GM10248 (cell line): ENCODE measurements at regions of chr12 and their contacts with region 1.

Region 1: GRCh38 chr12:48995061-48995879 is 3.9 kb downstream of the DDN start:
- DNase-seq: peak; percentile 83
- CTCF ChIP-seq: peak; percentile 81

Region 2: DNA sequence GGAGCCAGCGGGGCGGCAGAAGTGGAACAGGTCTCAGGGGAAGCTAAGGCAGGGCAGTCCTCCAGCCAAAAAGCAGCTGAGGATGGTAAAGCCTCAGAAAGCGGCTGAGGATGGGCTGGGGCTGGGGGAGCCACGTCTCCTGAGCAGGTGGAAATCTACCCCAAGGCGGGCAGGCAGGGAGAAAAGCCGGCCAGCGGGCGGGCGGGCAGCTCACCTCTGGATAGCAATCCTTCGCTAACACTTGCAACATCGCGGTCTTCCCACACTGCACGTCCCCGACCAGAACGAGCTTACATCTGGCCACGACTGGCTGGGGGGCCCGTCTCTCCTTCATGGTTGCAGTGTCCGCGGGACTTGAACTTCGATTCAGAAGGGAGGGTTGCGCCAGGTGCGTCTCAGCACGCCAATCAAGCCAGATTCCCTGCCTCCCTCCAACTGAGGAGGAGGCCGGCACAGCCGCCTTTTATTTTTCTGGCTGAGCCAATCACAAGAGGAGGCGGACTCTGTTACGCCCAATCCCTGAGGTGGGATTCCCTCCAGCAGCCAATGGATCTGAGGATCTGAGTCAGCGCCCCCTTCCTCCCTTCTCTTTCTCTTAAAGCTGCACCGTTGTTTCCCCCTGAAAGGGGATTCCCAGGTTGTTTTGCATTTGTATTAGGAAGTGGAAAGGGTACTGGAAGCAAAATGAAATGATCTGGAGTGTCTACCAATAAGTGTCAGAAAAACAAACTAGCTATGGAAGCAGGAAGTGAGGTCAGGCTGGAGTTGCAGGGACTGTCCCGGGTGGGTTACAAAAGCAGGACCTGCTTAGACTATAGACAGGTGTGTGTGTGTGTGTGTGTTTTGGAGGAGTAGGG is 129.6 kb before region 1 on chr12 and contains the start of gene RND1:
- CTCF ChIA-PET with region 1: interaction called, 13 read pairs
- POLR2A ChIA-PET with region 1: interaction called, 3 read pairs
- DNase-seq: peak; percentile 93
- CTCF ChIP-seq: no peak

Region 3: DNA sequence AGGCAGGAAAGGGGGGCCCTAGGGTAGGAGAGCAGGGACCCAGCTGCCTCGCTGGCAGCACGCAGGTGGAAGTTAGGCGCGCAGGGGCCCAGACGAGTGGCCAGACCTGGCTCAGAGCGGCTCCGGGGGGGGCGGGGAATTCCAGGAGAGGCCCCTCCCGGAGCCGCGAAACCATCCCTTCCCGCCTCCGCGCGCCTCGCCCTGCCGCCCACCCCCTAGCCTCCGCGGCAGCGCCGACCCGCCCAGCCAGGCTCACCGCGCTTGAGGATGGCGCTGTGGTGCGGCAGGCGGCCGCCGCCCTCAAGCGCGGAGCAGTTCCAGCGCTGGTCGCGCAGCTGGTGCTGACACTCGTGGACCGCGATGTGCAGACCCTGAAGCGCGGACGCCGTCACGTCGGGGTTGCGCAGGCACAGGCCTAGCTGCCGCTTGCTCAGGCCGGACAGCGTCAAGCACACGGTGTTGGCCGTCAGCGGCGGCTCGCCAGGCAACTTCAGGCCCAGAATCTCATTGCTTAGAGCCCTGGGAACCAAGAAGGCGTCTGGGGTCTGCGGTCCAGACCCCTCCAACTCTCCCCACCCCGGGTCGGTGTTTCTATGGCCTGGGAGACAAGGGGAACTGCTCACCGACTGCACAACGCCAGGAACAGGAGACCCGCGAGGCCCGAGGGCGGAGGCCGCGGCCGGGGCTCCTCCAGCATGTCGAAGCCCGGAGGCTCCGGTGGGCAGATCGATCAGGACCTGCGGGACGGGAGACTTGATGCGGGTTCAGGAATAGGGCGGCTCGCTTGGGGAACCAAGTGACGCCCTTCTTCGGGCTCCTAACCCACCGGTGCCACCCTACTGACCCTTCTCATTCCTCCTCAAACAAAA is 25.2 kb before region 1 on chr12:
- CTCF ChIA-PET with region 1: interaction called, 417 read pairs
- POLR2A ChIA-PET with region 1: no interaction called
- DNase-seq: peak; percentile 66
- CTCF ChIP-seq: peak; percentile 29

Region 4: DNA sequence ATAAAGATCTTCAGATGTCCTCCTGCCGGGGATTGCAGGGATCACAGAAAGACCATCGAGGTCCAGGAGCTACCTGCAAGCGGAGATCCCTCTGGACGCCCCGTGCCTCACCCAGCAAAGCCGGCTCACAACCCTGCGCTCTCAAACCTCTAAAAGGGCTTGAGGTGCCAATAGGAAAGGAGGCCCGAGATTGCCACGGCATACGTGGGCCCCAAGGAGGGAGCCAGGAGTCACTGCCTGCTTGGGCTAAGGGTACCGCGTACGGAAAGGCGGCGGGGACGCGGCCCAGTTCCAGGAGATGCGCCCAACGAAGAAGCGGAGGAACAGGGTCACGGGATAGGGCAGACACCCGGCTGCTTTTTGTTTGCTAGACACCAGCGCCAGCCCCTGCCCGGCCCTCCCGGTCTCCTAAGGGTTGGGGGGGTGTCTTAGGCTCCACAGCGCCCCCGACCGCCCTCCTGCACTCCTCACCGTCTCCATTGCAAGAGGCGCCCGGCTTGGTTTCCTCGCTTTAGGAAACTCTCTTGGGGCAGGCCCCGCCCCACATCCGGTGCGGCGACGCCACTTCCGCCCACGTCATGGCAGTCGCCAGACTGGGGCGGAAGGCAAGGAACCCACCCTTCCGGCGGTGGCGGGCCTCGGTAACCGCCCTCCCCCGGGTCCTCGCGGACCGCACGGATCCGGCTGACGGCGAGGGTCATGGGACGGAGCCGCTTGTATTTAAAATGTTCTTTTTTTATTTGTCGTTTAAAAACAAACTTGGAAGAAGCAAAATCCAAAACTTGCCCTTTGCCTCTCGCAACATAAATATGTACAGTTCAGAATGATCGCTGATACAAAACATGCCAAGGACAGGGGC is 23.2 kb after region 1 on chr12 and contains the start of gene PRKAG1:
- CTCF ChIA-PET with region 1: interaction called, 253 read pairs
- POLR2A ChIA-PET with region 1: interaction called, 6 read pairs
- DNase-seq: peak; percentile 99
- CTCF ChIP-seq: peak; percentile 53

Region 5: GRCh38 chr12:49037111-49037946 is 42.1 kb after region 1 on chr12:
- CTCF ChIA-PET with region 1: interaction called, 18 read pairs
- POLR2A ChIA-PET with region 1: interaction called, 4 read pairs
- DNase-seq: no peak
- CTCF ChIP-seq: no peak

Region 6: DNA sequence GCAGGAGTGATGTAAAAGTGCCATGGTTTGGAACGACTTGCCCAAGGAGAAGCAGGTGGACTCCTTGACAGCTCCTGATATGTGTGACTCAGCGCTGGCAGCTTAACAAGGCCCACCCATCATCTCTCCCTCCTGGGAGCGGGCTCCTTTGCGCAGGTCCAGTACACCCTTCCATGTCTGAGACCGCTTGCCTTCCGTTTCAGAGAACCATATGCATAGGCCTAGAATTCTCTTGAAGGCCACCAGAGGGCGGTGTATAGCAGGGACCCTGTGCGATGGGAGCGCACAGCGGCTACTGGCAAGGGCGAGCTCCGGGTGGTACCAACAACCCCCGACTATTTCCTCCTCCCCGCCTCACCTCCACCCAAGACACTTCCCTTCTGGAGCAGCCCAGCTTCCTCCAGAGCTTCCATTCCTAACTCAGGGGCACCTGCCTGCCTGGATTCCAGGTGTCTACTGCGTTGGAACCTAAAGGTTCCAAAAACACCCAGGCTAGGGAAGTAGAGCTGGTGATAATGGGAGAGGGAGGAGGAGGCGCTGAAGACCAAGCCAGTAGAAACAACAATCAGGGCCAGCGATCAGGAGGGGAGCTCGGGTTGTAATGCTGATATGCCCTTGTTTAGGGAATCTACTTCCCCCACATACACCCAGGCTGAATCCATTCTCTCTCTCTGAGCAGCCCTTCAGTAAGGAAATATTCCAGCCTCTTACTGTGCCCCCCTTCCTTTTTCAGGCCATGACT is 93.1 kb after region 1 on chr12:
- CTCF ChIA-PET with region 1: interaction called, 27 read pairs
- POLR2A ChIA-PET with region 1: no interaction called
- DNase-seq: peak; percentile 83
- CTCF ChIP-seq: peak; percentile 92

Region 7: DNA sequence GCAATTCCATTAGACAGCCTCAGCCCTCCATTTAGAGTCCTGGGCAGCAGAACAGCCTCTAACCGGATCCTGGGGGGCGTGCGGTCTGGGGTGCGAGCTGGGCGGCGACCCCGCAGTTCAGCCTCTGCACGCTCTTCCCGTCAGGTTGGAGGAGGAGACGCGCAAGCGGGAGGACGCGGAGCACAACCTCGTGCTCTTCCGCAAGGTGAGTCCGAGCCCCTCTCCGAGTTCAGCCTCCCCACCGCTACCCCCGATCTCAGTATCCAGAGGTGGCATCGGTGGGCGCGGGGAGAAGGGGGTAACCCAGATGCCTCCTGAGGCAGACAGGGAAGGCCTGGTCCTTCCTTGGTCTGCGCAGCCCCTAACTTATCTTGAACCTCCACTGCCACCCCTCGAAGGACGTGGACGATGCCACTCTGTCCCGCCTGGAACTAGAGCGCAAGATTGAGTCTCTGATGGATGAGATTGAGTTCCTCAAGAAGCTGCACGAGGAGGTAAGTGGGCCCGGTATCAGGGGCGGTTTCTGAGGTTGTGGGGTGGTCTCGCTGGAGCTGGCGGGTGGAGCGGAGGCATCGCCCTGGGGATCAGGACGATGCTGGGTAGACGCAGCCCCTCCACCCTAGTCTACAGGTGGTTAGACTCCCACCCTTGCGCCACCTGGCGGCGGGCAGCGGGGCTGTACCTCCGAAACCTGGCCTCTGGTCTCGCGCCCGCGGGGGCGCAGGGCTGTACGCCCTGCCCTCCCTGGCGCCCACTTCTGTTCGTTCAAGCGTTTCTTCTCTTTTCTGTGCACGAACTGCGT is 301.0 kb after region 1 on chr12:
- CTCF ChIA-PET with region 1: no interaction called
- POLR2A ChIA-PET with region 1: no interaction called
- DNase-seq: peak; percentile 87
- CTCF ChIP-seq: peak; percentile 80